Gastrocnemius medialis (tissue), 4 donors: ENCODE measurements at regions of chr2 and their contacts with region 1.

Region 1: GRCh38 chr2:101518578-101519492 is 43.9 kb upstream of the RFX8 start:
- DNase-seq: peak; percentile 16 to 37
- ATAC-seq: peak; percentile 84 to 93
- H3K4me3 ChIP-seq: no peak overlapping the region
- H3K27ac ChIP-seq: peak overlapping the region in 1 of 4 donors; percentile 7
- H3K4me1 ChIP-seq: peaks cover 0 to 9% of the 10 kb centered on the region in 2 donors
- H3K27me3 ChIP-seq: no peaks in the 10 kb centered on the region
- CTCF ChIP-seq: peak in 4 of 5 experiments; percentile 6 to 59 (median 44)
- POLR2A ChIP-seq: no peak

Region 2: DNA sequence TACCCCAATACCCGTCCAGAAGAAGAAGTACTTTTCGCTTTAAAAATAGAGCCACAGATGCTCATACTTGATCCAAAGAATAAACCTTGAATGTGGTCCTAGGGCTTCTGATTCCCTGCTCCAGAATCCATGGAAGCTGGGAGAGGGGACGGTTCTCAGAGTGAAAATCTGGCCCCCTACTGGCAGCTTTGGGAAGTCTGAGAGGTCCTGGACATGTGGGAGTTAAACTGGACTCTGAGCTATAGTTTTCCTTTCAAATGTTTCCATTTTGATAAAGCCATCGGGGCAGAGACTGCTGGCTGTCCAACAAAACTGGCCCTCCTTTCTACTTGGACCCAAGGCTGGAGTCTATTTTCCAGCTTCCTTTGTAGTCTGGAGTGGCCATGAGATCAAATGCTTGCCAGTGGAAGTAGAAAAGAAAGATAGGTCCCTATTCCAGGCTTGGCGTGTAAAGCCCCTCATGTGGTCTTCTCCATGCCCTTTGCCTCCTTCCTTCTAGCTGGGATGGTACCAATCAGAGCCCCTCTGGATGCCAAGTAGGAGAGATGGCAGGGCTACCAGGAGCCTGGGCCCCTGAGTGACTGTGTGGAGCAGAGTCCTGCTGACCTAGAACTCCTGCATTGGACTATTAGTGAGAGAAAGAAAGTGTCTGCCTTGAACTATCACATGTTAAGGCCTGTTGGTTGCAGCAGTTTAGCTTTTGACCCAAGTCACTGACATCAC is 330.0 kb before region 1 on chr2:
- in situ Hi-C with region 1: no loop called
- intact Hi-C with region 1: no loop called
- DNase-seq: no peak
- ATAC-seq: peak in 1 of 2 donors; percentile 56
- H3K4me3 ChIP-seq: no peak overlapping the region
- H3K27ac ChIP-seq: no peak overlapping the region
- H3K4me1 ChIP-seq: no peaks in the 10 kb centered on the region
- H3K27me3 ChIP-seq: no peaks in the 10 kb centered on the region
- CTCF ChIP-seq: peak in 3 of 5 experiments; percentile 17 to 52 (median 27)
- POLR2A ChIP-seq: no peak

Region 3: GRCh38 chr2:101361121-101361870 is 157.5 kb before region 1 on chr2:
- in situ Hi-C with region 1: no loop called
- intact Hi-C with region 1: no loop called
- DNase-seq: no peak
- ATAC-seq: no peak
- H3K4me3 ChIP-seq: no peak overlapping the region
- H3K27ac ChIP-seq: no peak overlapping the region
- H3K4me1 ChIP-seq: no peaks in the 10 kb centered on the region
- H3K27me3 ChIP-seq: no peaks in the 10 kb centered on the region
- CTCF ChIP-seq: no peak
- POLR2A ChIP-seq: no peak

Region 4: DNA sequence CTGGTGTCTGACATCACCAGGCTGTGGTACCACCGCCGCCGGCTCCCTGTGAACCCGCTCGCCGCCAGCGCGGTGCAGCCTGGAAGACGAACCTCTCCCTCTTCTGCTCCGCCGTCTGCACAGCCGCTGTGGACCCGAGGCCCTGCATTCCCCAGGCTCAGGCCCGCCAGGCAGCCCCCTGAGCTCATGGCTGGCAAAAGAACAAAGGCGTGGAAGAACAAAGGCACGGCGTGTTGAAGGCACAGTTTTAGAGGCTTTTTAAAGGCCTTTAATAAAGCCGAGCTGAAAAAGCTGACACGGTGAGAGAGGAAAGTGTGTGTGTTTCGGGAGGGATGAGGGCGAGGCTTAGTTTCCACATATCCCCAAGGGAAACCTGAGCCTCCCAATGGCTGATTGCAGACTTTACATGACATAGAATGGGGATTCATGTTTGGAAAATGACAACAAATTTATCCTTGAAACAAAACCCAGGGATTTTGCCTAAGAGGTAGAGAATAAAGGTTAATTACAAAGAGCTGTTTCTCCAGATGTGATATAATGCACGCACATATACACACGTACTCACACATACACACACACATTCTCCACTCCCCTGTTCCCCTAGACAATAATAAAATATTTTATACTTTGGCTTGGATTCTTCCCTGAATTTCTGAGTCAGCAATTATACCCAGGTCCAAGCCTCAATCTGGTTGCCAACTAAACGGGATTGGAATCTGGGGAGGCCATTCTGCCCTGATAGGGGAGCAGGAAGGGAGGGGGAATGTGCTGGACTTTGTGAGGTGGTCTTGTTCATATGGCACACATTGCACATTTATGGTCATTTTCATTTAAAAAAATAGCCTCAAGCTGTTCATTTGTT is 83.6 kb before region 1 on chr2:
- in situ Hi-C with region 1: no loop called
- intact Hi-C with region 1: no loop called
- DNase-seq: no peak
- ATAC-seq: no peak
- H3K4me3 ChIP-seq: no peak overlapping the region
- H3K27ac ChIP-seq: no peak overlapping the region
- H3K4me1 ChIP-seq: no peaks in the 10 kb centered on the region
- H3K27me3 ChIP-seq: no peaks in the 10 kb centered on the region
- CTCF ChIP-seq: no peak
- POLR2A ChIP-seq: no peak

Region 5: DNA sequence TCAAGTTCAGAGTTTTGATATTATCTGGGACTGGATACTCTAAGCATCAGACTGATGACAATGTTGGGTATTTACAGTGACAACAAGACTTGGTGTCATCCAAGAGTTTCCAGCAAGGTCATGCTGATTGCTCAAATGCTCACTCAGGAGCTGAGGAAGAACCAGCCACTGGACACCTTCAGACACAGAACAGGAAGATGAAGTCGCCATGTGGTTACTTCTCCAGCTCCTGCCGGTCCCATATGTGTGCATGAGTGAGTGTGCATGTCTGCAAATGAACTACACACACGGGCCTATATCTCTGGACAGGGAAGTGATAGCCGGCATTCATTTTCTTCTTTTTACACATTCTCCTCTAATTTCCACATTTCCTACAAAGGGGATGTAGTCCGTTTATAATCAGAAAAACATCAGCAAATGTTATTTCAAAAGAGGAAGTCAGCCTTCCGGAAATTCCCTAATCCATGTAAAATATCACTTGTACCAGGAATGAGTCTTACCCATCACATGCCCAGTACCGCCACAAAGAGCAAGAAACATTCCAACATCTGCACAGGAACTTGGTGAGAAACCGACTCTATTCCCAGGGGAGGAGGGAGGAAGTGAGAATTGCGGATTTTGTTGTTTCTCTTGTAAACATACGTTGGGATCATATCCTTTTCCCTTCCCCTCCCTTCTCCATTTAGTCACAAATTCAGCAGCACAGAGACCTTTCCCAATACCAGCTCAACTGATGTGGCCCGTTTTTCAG is 54.8 kb before region 1 on chr2:
- in situ Hi-C with region 1: no loop called
- intact Hi-C with region 1: no loop called
- DNase-seq: no peak
- ATAC-seq: peak in 1 of 2 donors; percentile 55
- H3K4me3 ChIP-seq: no peak overlapping the region
- H3K27ac ChIP-seq: no peak overlapping the region
- H3K4me1 ChIP-seq: peaks cover 0 to 7% of the 10 kb centered on the region in 2 donors
- H3K27me3 ChIP-seq: no peaks in the 10 kb centered on the region
- CTCF ChIP-seq: no peak
- POLR2A ChIP-seq: no peak

Region 6: GRCh38 chr2:101558740-101559519 is 40.1 kb after region 1 on chr2:
- in situ Hi-C with region 1: no loop called
- intact Hi-C with region 1: loop called (anchors 2 kb)
- DNase-seq: no peak
- ATAC-seq: peak; percentile 93 to 95
- H3K4me3 ChIP-seq: peak overlapping the region; percentile 4 to 34 (median 20)
- H3K27ac ChIP-seq: peak overlapping the region; percentile 80 to 83 (median 82)
- H3K4me1 ChIP-seq: peaks cover 15 to 20% of the 10 kb centered on the region in 2 donors
- H3K27me3 ChIP-seq: no peaks in the 10 kb centered on the region
- CTCF ChIP-seq: no peak
- POLR2A ChIP-seq: no peak